ENCODE measurements at regions of chr10 and their contacts with region 1.

Region 1: DNA sequence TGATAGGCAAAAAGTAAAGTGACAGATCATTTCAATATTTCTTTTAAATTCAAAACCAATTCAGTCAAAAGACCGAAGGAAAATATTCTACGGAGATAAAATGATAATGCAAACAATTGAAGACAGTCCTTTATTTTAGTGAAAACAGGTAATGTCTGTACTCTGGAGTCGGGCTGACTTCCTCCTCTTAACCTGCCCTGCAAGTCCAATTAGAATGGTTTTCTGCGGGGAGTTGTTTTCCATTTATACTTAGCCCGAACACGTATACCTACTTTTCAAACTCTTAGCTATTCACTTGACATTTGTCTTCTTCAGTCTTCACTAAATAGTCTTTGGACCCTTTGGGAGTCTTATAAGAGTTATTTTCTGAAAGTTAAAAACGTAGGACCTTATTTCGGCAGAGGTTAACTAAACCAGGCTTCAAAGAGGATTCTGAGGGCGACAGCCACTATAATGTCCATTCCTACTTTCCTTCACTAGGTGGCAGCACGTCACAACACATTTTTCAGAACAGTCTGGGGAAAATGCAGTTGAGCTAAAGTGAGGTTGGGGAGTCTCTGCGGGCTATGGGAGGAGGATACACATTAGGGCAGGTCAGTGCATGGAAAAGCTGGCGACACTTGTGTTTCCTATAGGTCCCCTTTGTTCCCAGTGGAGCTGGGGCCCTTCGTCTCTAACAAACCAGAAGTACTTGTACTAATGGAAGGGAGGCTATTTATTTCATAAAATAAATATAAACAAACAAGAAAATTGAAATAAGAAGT is 472.0 kb downstream of the KCNMA1 start:
- DNase-seq: peak; percentile 68
- H3K4me3 ChIP-seq: peak overlapping the region in 2 of 3 experiments; percentile 3 to 16
- H3K27ac ChIP-seq: peak overlapping the region; percentile 96
- H3K4me1 ChIP-seq: peaks cover 43% of the 10 kb centered on the region
- H3K27me3 ChIP-seq: no peaks in the 10 kb centered on the region
- CTCF ChIP-seq: peak; percentile 76 to 79

Region 2: GRCh38 chr10:77195101-77195500 is 29.5 kb after region 1 on chr10:
- CTCF ChIA-PET with region 1: no interaction called
- dilution Hi-C with region 1: no loop called
- in situ Hi-C with region 1: no loop called
- intact Hi-C with region 1: loop called (anchors 1 kb)
- DNase-seq: peak; percentile 94
- H3K4me3 ChIP-seq: no peak overlapping the region
- H3K27ac ChIP-seq: peak overlapping the region; percentile 48
- H3K4me1 ChIP-seq: peaks cover 29% of the 10 kb centered on the region
- H3K27me3 ChIP-seq: no peaks in the 10 kb centered on the region
- CTCF ChIP-seq: no peak

Region 3: DNA sequence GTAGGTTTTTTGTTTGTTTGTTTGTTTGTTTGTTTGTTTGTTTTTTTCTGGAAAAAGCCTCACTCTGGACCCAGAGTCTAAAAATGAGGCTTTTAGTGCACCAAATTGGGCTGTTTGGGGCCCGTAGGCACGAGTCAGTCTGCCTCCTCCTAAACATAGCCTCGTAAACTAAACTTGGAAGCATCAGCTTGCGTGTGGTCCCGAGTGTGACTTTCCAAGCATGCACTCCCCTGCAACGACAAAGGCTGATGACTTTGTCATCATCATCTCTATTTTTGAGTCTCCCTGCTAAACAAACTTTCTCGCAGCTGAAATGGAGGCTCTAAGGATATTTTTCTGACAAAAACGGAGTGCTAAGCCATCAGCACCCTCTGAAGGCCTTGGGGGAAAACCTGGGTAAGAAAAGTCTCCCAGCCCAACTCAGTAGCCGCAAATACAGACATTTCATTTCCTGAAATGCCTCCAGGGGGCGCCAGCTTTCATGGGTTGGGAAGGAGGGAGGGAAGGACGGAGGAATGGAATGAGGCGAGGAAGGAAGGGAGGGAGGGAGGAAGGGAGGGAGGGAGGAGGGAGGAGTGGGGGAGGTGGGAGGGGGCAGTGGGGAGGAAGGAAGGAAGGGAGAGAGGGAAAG is 226.1 kb after region 1 on chr10:
- CTCF ChIA-PET with region 1: interaction called, 5 read pairs
- dilution Hi-C with region 1: no loop called
- in situ Hi-C with region 1: loop called in 1 of 2 experiments (anchors 10 kb)
- intact Hi-C with region 1: loop called (anchors 2 kb)
- DNase-seq: peak; percentile 78
- H3K4me3 ChIP-seq: no peak overlapping the region
- H3K27ac ChIP-seq: peak overlapping the region; percentile 64
- H3K4me1 ChIP-seq: peaks cover 66% of the 10 kb centered on the region
- H3K27me3 ChIP-seq: no peaks in the 10 kb centered on the region
- CTCF ChIP-seq: peak; percentile 59 to 75

Region 4: GRCh38 chr10:77501152-77501845 is 335.7 kb after region 1 on chr10:
- CTCF ChIA-PET with region 1: interaction called, 5 read pairs
- dilution Hi-C with region 1: loop called (anchors 25 kb)
- in situ Hi-C with region 1: loop called in 1 of 2 experiments (anchors 10 kb)
- intact Hi-C with region 1: loop called (anchors 2 kb)
- DNase-seq: peak; percentile 78
- H3K4me3 ChIP-seq: no peak overlapping the region
- H3K27ac ChIP-seq: peak overlapping the region; percentile 45
- H3K4me1 ChIP-seq: peaks cover 69% of the 10 kb centered on the region
- H3K27me3 ChIP-seq: no peaks in the 10 kb centered on the region
- CTCF ChIP-seq: no peak

Region 5: GRCh38 chr10:77641788-77642397 is 476.3 kb after region 1 on chr10:
- CTCF ChIA-PET with region 1: interaction called, 5 read pairs
- dilution Hi-C with region 1: loop called (anchors 25 kb)
- in situ Hi-C with region 1: loop called (anchors 5 kb)
- intact Hi-C with region 1: loop called (anchors 1 kb)
- DNase-seq: peak; percentile 58
- H3K4me3 ChIP-seq: no peak overlapping the region
- H3K27ac ChIP-seq: no peak overlapping the region
- H3K4me1 ChIP-seq: peaks cover 12% of the 10 kb centered on the region
- H3K27me3 ChIP-seq: no peaks in the 10 kb centered on the region
- CTCF ChIP-seq: peak; percentile 71 to 78

Region 6: GRCh38 chr10:77756319-77757232 is 590.9 kb after region 1 on chr10:
- CTCF ChIA-PET with region 1: interaction called, 6 read pairs
- dilution Hi-C with region 1: no loop called
- in situ Hi-C with region 1: no loop called
- intact Hi-C with region 1: loop called (anchors 2 kb)
- DNase-seq: peak; percentile 33
- H3K4me3 ChIP-seq: no peak overlapping the region
- H3K27ac ChIP-seq: no peak overlapping the region
- H3K4me1 ChIP-seq: peaks cover 8% of the 10 kb centered on the region
- H3K27me3 ChIP-seq: no peaks in the 10 kb centered on the region
- CTCF ChIP-seq: peak; percentile 79 to 85

Region 7: GRCh38 chr10:78029269-78030226 is 863.9 kb after region 1 on chr10 and contains the start of gene POLR3A:
- CTCF ChIA-PET with region 1: no interaction called
- dilution Hi-C with region 1: no loop called
- in situ Hi-C with region 1: no loop called
- intact Hi-C with region 1: loop called (anchors 10 kb)
- DNase-seq: peak; percentile 96
- H3K4me3 ChIP-seq: peak within 1 kb of the TSS; percentile 87 to 94 (median 87)
- H3K27ac ChIP-seq: peak within 1 kb of the TSS; percentile 74
- H3K4me1 ChIP-seq: peaks cover 38% of the 10 kb centered on the region
- H3K27me3 ChIP-seq: no peaks in the 10 kb centered on the region
- CTCF ChIP-seq: peak; percentile 53 to 72
- total RNA-seq, gene POLR3A: 20.8 to 21.2 TPM

Measured in mammary epithelial cell (primary cell).